Activated T-helper 1 cell treated with anti-CD3 and anti-CD28 coated beads, Interleukin-12 subunit alpha, Interleukin-12 subunit beta, Interleukin-2, Interleukin-4 antibody, amounts not matched to agents 30 ng/mL and 10 ng/mL and 1 ng/mL, durations not matched to agents 14 hours and 24 hours and 36 hours (primary cell): ENCODE measurements at regions of chr7 and their contacts with region 1.

Region 1: DNA sequence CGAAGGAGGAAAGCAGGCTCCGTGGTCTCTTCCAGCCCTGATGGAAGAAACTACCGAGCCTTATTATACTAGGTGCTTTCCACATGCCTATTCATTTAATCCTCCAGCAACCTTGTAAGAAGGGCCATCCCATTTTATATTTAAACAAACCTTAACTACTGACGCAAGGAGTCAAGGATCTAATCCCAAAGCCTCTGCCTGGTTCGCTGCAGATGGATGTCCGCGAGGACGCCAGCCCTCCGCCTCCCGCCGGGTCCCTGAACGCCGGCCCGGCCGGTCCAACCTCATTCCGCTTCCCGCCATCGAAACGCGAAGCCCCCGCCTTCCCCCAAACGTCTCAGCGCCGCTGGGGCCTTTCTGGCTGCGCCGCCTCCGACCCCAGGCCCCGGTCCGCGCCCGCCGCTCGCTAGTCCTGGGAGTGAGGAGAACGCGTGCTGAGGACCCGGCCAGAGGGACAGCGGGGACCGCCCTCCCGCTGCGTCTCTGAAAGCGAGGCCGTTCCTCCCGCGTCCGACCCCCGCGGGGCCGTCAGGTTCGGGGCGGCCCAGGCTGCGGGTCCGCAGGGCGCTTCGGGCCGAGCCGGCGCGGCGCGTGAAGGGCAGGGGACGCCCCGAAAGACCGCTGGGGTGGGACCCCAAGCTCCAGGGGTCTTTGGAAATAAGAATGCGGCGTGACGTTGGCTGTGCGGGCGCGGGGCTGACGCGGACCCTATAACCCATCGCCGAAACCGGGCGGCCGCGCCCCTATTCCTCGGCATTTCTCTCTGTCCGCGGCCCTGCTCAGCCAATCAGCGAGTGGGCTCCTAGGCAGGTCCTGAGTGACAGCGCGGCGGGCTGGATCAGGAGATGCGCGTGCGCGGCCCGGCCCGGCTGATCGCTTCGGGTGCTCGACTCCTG is at the start of gene ATP6V0E2:
- DNase-seq: peak; percentile 92
- H3K4me3 Mint-ChIP-seq: peak within 1 kb of the TSS; percentile 90
- H3K27ac Mint-ChIP-seq: peak within 1 kb of the TSS; percentile 92
- H3K4me1 Mint-ChIP-seq: peaks cover 75% of the 10 kb centered on the region
- H3K27me3 Mint-ChIP-seq: no peaks in the 10 kb centered on the region
- total RNA-seq, gene ATP6V0E2: 47.5 and 51.2 TPM in 2 replicates

Region 2: DNA sequence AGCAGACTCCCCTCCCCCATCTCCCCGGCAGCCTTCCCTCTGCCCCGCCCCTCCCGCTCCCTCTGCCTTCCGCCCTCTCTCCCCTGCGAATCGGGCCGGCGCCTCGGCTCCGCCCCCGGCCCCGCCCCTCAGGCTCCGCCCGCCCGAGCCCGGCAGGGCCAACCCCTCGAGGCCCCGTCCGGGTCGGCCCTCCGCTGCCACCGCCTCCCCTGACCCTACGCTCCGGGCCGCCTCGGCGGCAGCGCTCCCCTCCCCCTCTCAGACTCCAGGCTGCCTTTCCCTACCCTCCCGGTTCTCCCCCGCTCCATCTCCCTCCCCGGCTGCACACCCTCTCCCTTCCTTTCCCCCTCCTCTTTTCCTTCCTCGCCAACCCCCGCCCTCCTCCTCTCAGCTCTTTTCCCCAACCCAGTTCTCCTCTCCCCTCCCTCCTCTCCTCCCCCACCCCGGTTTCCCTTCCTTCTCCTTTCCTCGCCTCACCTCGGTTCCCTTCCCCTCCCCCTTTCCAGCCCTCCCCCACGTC is 101.5 kb before region 1 on chr7:
- intact Hi-C with region 1: loop called (anchors 1 kb)
- DNase-seq: peak; percentile 83
- H3K4me3 Mint-ChIP-seq: peak overlapping the region; percentile 82
- H3K27ac Mint-ChIP-seq: no peak overlapping the region
- H3K4me1 Mint-ChIP-seq: no peaks in the 10 kb centered on the region
- H3K27me3 Mint-ChIP-seq: peaks cover 28% of the 10 kb centered on the region